ENCODE measurements at regions of chr12 and their contacts with region 1.

Region 1: GRCh38 chr12:48795480-48796455 is 6.9 kb upstream of the ADCY6 start:
- DNase-seq: peak; percentile 55
- H3K4me3 ChIP-seq: no peak overlapping the region
- H3K27ac ChIP-seq: no peak overlapping the region
- H3K4me1 ChIP-seq: no peaks in the 10 kb centered on the region
- CTCF ChIP-seq: peak; percentile 95

Region 2: GRCh38 chr12:48542300-48542928 is 253.4 kb before region 1 on chr12:
- CTCF ChIA-PET with region 1: no interaction called
- POLR2A ChIA-PET with region 1: no interaction called
- intact Hi-C with region 1: loop called (anchors 5 kb)
- DNase-seq: peak; percentile 20
- H3K4me3 ChIP-seq: no peak overlapping the region
- H3K27ac ChIP-seq: no peak overlapping the region
- H3K4me1 ChIP-seq: no peaks in the 10 kb centered on the region
- CTCF ChIP-seq: peak; percentile 76

Region 3: GRCh38 chr12:48640854-48641253 is 154.9 kb before region 1 on chr12:
- CTCF ChIA-PET with region 1: no interaction called
- POLR2A ChIA-PET with region 1: no interaction called
- intact Hi-C with region 1: no loop called
- DNase-seq: no peak
- H3K4me3 ChIP-seq: no peak overlapping the region
- H3K27ac ChIP-seq: no peak overlapping the region
- H3K4me1 ChIP-seq: no peaks in the 10 kb centered on the region
- CTCF ChIP-seq: no peak

Region 4: GRCh38 chr12:48758221-48758620 is 37.5 kb before region 1 on chr12:
- CTCF ChIA-PET with region 1: interaction called, 7 read pairs
- POLR2A ChIA-PET with region 1: interaction called, 3 read pairs
- intact Hi-C with region 1: loop called (anchors 1 kb)
- DNase-seq: no peak
- H3K4me3 ChIP-seq: no peak overlapping the region
- H3K27ac ChIP-seq: no peak overlapping the region
- H3K4me1 ChIP-seq: no peaks in the 10 kb centered on the region
- CTCF ChIP-seq: no peak

Measured in OCI-LY7 (cell line).